Activated naive CD4-positive, alpha-beta T cell treated with anti-CD3 and anti-CD28 coated beads for 36 hours (primary cell): ENCODE measurements at regions of chr2 and their contacts with region 1.

Region 1: GRCh38 chr2:101745711-101746387 is 48.3 kb downstream of the MAP4K4 start:
- DNase-seq: no peak
- H3K4me3 Mint-ChIP-seq: peak overlapping the region; percentile 12
- H3K27ac Mint-ChIP-seq: peak overlapping the region; percentile 56
- H3K4me1 Mint-ChIP-seq: peaks cover 69% of the 10 kb centered on the region
- H3K27me3 Mint-ChIP-seq: no peaks in the 10 kb centered on the region

Region 2: GRCh38 chr2:101758001-101758400 is 12.2 kb after region 1 on chr2:
- CTCF ChIA-PET with region 1: interaction called, 5 read pairs
- intact Hi-C with region 1: loop called (anchors 1 kb)
- DNase-seq: peak; percentile 60
- H3K4me3 Mint-ChIP-seq: peak overlapping the region; percentile 48
- H3K27ac Mint-ChIP-seq: peak overlapping the region; percentile 81
- H3K4me1 Mint-ChIP-seq: peaks cover 77% of the 10 kb centered on the region
- H3K27me3 Mint-ChIP-seq: no peaks in the 10 kb centered on the region